T-cell (primary cell): ENCODE measurements at regions of chr5 and their contacts with region 1.

Region 1: DNA sequence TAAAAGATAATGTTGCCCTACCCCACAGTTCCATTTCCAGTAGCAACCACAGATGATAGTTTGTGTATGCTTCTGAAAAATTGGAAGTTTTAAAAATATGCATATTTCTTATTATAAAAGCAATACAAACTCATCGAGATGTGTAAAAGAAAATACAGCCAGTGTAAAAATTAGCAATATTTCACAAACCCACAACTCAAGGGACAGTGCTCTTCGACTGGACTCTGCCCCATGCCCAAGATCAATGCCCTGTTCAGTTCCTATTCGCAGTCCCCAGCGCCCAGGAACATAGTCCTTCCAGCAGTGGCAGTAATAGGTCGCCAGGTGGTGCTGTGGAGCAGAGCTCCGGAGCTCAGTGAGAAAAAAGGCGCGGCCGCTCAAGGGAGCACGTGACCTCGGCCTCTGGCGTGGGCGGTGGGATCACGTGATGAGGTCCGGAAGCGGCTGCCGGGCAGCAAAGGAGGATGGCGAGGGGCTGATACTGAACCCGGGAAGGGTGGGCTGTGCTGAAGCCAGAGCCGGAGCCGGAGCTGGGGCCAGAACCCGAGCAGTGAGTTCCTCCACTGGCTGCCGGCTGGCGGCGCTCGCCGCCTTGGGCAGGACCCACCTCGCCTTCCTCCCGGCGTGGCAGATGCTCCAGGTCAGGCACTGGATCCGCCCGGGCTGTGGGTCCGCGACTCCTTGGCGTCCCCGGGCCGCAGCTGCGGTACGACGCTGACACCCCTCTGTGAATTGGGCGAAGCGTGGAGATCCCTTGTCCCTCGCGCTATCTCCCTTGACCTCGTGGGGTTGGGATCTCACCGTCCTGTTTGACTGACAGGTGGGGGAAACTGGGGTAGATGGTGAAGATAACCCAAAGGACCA is at the start of gene SLC36A1:
- DNase-seq: peak; percentile 69 to 94 (median 86)
- ATAC-seq: peak; percentile 93 to 96 (median 95)
- H3K4me3 ChIP-seq: peak within 1 kb of the TSS; percentile 78 to 88
- H3K4me3 Mint-ChIP-seq: peak within 1 kb of the TSS; percentile 85 to 96 (median 93)
- H3K27ac ChIP-seq: peak within 1 kb of the TSS; percentile 14
- H3K27ac Mint-ChIP-seq: peak within 1 kb of the TSS; percentile 85 to 87
- H3K4me1 ChIP-seq: peaks cover 3 to 12% of the 10 kb centered on the region in 2 experiments
- H3K4me1 Mint-ChIP-seq: peaks cover 17 to 19% (median 19%) of the 10 kb centered on the region in 3 donors
- H3K27me3 ChIP-seq: peaks cover 0 to 6% of the 10 kb centered on the region in 2 experiments
- H3K27me3 Mint-ChIP-seq: peaks cover 10 to 21% of the 10 kb centered on the region in 2 donors
- total RNA-seq, gene SLC36A1: 5.1 to 8.5 (median 6.3) TPM

Region 2: GRCh38 chr5:151338734-151339133 is 108.7 kb before region 1 on chr5:
- CTCF ChIA-PET with region 1: no interaction called
- POLR2A ChIA-PET with region 1: no interaction called
- DNase-seq: peak in 1 of 35 experiments; percentile 11
- ATAC-seq: no peak
- H3K4me3 ChIP-seq: no peak overlapping the region
- H3K4me3 Mint-ChIP-seq: no peak overlapping the region
- H3K27ac ChIP-seq: no peak overlapping the region
- H3K27ac Mint-ChIP-seq: peak overlapping the region in 1 of 2 donors; percentile 10
- H3K4me1 ChIP-seq: no peaks in the 10 kb centered on the region
- H3K4me1 Mint-ChIP-seq: peaks cover 0 to 12% (median 8%) of the 10 kb centered on the region in 3 donors
- H3K27me3 ChIP-seq: peaks cover 0 to 8% of the 10 kb centered on the region in 2 experiments
- H3K27me3 Mint-ChIP-seq: peaks cover 21 to 25% of the 10 kb centered on the region in 2 donors

Region 3: DNA sequence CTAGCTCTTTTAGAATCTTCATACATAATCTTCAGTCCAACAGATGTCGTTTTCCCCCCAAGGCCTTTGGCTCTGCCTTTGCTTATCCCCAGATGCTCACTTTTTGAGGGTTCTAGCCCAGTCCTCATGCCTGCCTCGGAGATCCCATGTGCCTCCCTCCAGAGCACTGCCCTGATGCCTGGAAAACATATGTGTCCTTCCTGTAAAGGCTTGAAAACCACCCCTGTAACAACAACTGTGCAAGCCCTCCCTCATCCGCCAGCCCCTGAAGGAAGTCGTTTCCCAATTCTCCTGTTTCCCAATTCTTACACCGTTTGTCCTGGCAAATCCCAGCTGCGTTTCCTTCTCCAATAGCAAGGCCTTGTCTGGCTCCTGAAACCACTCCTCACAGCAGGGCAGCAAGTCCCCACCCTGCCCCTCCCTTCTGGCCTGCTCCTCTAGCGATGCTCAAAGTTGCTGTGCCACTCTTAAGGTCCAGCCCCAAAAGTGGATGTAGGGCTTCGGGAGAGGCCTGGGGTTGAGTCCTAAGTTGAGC is 52.2 kb after region 1 on chr5:
- CTCF ChIA-PET with region 1: interaction called, 5 to 12 read pairs
- POLR2A ChIA-PET with region 1: no interaction called
- DNase-seq: no peak
- ATAC-seq: no peak
- H3K4me3 ChIP-seq: no peak overlapping the region
- H3K4me3 Mint-ChIP-seq: no peak overlapping the region
- H3K27ac ChIP-seq: no peak overlapping the region
- H3K27ac Mint-ChIP-seq: no peak overlapping the region
- H3K4me1 ChIP-seq: peaks cover 0 to 6% of the 10 kb centered on the region in 2 experiments
- H3K4me1 Mint-ChIP-seq: peaks cover 5 to 8% (median 5%) of the 10 kb centered on the region in 3 donors
- H3K27me3 ChIP-seq: no peaks in the 10 kb centered on the region
- H3K27me3 Mint-ChIP-seq: no peaks in the 10 kb centered on the region

Region 4: DNA sequence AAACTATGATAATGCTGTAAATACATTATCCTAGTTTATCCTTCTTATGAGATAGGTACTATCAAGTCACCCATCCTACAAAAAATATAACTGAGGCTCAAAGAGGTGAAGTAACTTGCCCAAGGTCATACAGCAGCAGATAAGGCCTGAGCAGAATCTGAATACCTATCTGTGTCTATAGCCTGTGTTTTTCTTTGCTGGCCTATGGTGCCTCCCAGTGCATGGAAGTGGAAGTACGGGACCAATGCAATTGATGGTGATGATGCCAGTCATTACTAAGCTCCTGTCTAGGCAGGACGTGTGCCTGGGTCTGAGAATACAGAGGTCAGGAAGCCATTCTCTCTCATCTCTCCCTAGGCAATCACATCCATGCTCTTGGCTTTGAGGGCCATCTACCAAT is 75.9 kb after region 1 on chr5:
- CTCF ChIA-PET with region 1: interaction called, 3 to 15 read pairs
- POLR2A ChIA-PET with region 1: no interaction called
- DNase-seq: peak in 17 of 35 experiments; percentile 5 to 52 (median 14)
- ATAC-seq: peak; percentile 48 to 75 (median 62)
- H3K4me3 ChIP-seq: no peak overlapping the region
- H3K4me3 Mint-ChIP-seq: no peak overlapping the region
- H3K27ac ChIP-seq: no peak overlapping the region
- H3K27ac Mint-ChIP-seq: no peak overlapping the region
- H3K4me1 ChIP-seq: peaks cover 0 to 3% of the 10 kb centered on the region in 2 experiments
- H3K4me1 Mint-ChIP-seq: peaks cover 0 to 11% (median 5%) of the 10 kb centered on the region in 3 donors
- H3K27me3 ChIP-seq: peaks cover 0 to 4% of the 10 kb centered on the region in 2 experiments
- H3K27me3 Mint-ChIP-seq: no peaks in the 10 kb centered on the region

Region 5: GRCh38 chr5:151651997-151652645 is 204.7 kb after region 1 on chr5:
- CTCF ChIA-PET with region 1: interaction called, 6 to 10 read pairs
- POLR2A ChIA-PET with region 1: no interaction called
- DNase-seq: peak; percentile 19 to 82 (median 54)
- ATAC-seq: peak; percentile 76 to 98 (median 92)
- H3K4me3 ChIP-seq: no peak overlapping the region
- H3K4me3 Mint-ChIP-seq: no peak overlapping the region
- H3K27ac ChIP-seq: no peak overlapping the region
- H3K27ac Mint-ChIP-seq: no peak overlapping the region
- H3K4me1 ChIP-seq: peaks cover 0 to 3% of the 10 kb centered on the region in 2 experiments
- H3K4me1 Mint-ChIP-seq: no peaks in the 10 kb centered on the region
- H3K27me3 ChIP-seq: no peaks in the 10 kb centered on the region
- H3K27me3 Mint-ChIP-seq: peaks cover 3 to 5% of the 10 kb centered on the region in 2 donors